ENCODE measurements at regions of chr10 and their contacts with region 1.

Region 1: GRCh38 chr10:119859420-119860258 is 13.0 kb downstream of the MCMBP start:
- DNase-seq: no peak
- ATAC-seq: no peak
- H3K4me3 Mint-ChIP-seq: no peak overlapping the region
- H3K27ac Mint-ChIP-seq: peak overlapping the region; percentile 61
- H3K4me1 Mint-ChIP-seq: peaks cover 27% of the 10 kb centered on the region
- H3K27me3 Mint-ChIP-seq: no peaks in the 10 kb centered on the region
- CTCF ChIP-seq: 0 out of 2 replicates have a peak, but pooled peaks have one; percentile 34

Region 2: DNA sequence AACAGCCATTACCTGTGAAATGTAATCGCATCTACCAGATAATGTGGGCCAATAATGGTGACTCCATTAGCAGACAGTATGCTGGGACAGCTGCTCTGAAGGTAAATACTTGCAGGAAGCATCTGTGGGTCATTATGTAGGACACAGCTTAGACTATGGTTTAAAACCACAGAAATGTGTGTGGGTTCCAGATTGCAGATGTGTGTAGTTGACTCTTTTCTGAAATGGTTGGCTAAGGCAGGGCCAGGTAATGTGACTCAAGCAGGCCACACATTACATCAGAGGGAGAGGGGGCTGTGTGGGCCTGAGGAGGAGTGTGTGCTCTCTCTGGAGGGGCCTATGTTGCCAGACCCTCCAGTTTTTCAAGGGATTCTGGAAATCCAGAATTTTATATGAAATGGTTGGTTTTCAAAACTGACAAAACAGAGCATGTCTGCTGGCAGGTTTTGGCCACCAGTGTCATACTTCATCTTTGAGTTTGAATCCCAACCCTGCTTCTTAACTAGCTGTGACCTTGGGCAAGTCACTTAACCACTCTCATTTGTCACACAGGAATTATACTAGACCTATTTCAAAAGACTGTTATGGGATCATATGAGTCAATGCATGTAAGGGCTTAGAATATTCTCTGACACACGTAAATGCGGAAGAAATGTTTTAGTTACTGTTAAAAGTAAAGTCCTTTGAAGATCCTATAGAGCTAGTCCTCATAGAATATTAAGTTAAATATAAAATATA is 51.5 kb before region 1 on chr10:
- CTCF ChIA-PET with region 1: no interaction called
- POLR2A ChIA-PET with region 1: no interaction called
- DNase-seq: no peak
- ATAC-seq: no peak
- H3K4me3 Mint-ChIP-seq: no peak overlapping the region
- H3K27ac Mint-ChIP-seq: no peak overlapping the region
- H3K4me1 Mint-ChIP-seq: no peaks in the 10 kb centered on the region
- H3K27me3 Mint-ChIP-seq: no peaks in the 10 kb centered on the region
- CTCF ChIP-seq: no peak

Region 3: DNA sequence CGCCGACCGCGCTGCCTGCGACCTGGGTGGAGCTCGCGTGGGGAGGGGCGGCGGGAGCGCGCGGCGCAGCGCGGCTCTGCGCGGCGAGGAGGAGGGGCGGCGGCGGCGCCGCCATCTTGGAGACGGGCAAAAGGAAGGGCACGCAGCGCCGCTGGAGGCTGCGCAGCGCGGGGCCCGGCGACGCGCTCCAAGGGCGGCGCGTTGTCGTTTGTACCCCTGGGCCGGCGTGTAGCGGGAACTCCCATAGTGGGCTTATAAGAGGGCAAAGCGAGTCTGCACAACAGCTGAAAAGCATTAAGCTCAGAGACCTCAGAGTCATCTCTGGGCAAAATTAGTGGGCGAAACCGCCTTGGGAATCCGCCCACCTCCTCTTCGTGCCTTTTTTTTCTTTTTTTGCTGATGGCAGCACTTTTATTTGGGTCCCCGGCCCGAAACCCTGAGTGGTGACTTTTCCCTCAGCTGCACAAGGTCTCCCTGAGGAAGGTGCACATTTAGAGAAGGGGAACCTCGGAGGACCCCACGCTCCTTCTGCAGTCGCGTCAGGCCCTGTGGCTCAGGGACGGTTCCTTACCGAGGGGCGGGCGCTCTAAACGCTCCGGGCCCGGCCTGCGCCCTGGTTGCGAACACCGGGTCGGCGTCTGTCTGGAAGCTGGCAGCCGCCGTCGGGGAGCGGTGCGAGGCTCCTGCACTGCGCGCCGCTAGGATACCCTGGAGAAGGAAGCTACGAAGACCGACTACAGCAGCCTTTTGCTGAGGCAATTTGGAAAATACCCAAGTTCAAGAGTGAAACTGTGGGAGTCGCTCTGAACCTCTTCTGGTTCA is 13.4 kb after region 1 on chr10:
- CTCF ChIA-PET with region 1: interaction called, 10 read pairs
- POLR2A ChIA-PET with region 1: interaction called, 4 read pairs
- DNase-seq: peak; percentile 76
- ATAC-seq: peak; percentile 83
- H3K4me3 Mint-ChIP-seq: peak overlapping the region; percentile 83
- H3K27ac Mint-ChIP-seq: peak overlapping the region; percentile 74; the same call in 1 of the 2 replicates
- H3K4me1 Mint-ChIP-seq: peaks cover 35% of the 10 kb centered on the region
- H3K27me3 Mint-ChIP-seq: no peaks in the 10 kb centered on the region
- CTCF ChIP-seq: no peak

Measured in WTC11 (cell line).